Activated B cell treated with CpG ODN at 0.5 μM for 24 hours (primary cell): ENCODE measurements at regions of chr17 and their contacts with region 1.

Region 1: DNA sequence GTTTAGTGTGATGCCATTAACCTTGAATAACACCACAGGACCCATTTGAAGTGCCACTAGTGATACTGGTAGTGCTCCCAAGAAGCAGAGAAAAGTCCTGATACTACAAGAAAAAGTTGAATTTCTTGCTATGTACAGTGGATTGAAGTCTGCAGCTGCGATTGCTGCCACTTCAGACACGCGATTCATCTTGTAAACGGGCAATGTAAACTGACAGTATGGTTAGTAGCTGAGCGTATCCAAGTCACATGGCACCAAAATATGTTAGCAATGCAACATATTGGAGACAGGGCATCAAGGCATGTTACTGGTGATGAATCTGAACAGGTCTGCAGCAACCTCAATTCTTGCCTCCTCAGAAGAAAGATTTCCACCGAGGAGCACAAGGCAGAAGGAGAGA is 238.9 kb downstream of the HS3ST3B1 start:
- DNase-seq: no peak
- ATAC-seq: no peak
- H3K4me3 Mint-ChIP-seq: no peak overlapping the region
- H3K27ac Mint-ChIP-seq: no peak overlapping the region
- H3K4me1 Mint-ChIP-seq: no peaks in the 10 kb centered on the region
- H3K27me3 Mint-ChIP-seq: peaks cover 4% of the 10 kb centered on the region
- CTCF ChIP-seq: no peak

Region 2: GRCh38 chr17:13735444-13735843 is 804.4 kb before region 1 on chr17:
- CTCF ChIA-PET with region 1: no interaction called
- POLR2A ChIA-PET with region 1: no interaction called
- intact Hi-C with region 1: loop called (anchors 5 kb)
- DNase-seq: no peak
- ATAC-seq: no peak
- H3K4me3 Mint-ChIP-seq: no peak overlapping the region
- H3K27ac Mint-ChIP-seq: no peak overlapping the region
- H3K4me1 Mint-ChIP-seq: no peaks in the 10 kb centered on the region
- H3K27me3 Mint-ChIP-seq: no peaks in the 10 kb centered on the region
- CTCF ChIP-seq: no peak

Region 3: GRCh38 chr17:14451729-14452191 is 88.0 kb before region 1 on chr17:
- CTCF ChIA-PET with region 1: no interaction called
- POLR2A ChIA-PET with region 1: no interaction called
- intact Hi-C with region 1: no loop called
- DNase-seq: no peak
- ATAC-seq: no peak
- H3K4me3 Mint-ChIP-seq: no peak overlapping the region
- H3K27ac Mint-ChIP-seq: no peak overlapping the region
- H3K4me1 Mint-ChIP-seq: peaks cover 15% of the 10 kb centered on the region
- H3K27me3 Mint-ChIP-seq: peaks cover 2% of the 10 kb centered on the region
- CTCF ChIP-seq: no peak